ENCODE measurements at regions of chr16 and their contacts with region 1.

Region 1: GRCh38 chr16:62225697-62226280 is 189.6 kb upstream of the CDH8 start:
- DNase-seq: peak; percentile 97
- H3K4me3 ChIP-seq: no peak overlapping the region
- H3K27ac ChIP-seq: no peak overlapping the region
- H3K4me1 ChIP-seq: no peaks in the 10 kb centered on the region
- H3K27me3 ChIP-seq: no peaks in the 10 kb centered on the region
- CTCF ChIP-seq: peak; percentile 88

Region 2: GRCh38 chr16:62256406-62256805 is 30.6 kb after region 1 on chr16:
- CTCF ChIA-PET with region 1: interaction called, 19 read pairs
- POLR2A ChIA-PET with region 1: no interaction called
- intact Hi-C with region 1: loop called (anchors 1 kb)
- DNase-seq: peak; percentile 82
- H3K4me3 ChIP-seq: no peak overlapping the region
- H3K27ac ChIP-seq: no peak overlapping the region
- H3K4me1 ChIP-seq: peaks cover 4% of the 10 kb centered on the region
- H3K27me3 ChIP-seq: no peaks in the 10 kb centered on the region
- CTCF ChIP-seq: peak; percentile 70

Region 3: GRCh38 chr16:62503073-62503472 is 277.3 kb after region 1 on chr16:
- CTCF ChIA-PET with region 1: no interaction called
- POLR2A ChIA-PET with region 1: no interaction called
- intact Hi-C with region 1: no loop called
- DNase-seq: no peak
- H3K4me3 ChIP-seq: no peak overlapping the region
- H3K27ac ChIP-seq: no peak overlapping the region
- H3K4me1 ChIP-seq: no peaks in the 10 kb centered on the region
- H3K27me3 ChIP-seq: no peaks in the 10 kb centered on the region
- CTCF ChIP-seq: no peak

Region 4: GRCh38 chr16:62870554-62870953 is 644.8 kb after region 1 on chr16:
- CTCF ChIA-PET with region 1: interaction called, 3 read pairs
- POLR2A ChIA-PET with region 1: no interaction called
- intact Hi-C with region 1: loop called (anchors 10 kb)
- DNase-seq: no peak
- H3K4me3 ChIP-seq: no peak overlapping the region
- H3K27ac ChIP-seq: no peak overlapping the region
- H3K4me1 ChIP-seq: no peaks in the 10 kb centered on the region
- H3K27me3 ChIP-seq: no peaks in the 10 kb centered on the region
- CTCF ChIP-seq: 0 out of 2 replicates have a peak, but pooled peaks have one; percentile 30

Region 5: DNA sequence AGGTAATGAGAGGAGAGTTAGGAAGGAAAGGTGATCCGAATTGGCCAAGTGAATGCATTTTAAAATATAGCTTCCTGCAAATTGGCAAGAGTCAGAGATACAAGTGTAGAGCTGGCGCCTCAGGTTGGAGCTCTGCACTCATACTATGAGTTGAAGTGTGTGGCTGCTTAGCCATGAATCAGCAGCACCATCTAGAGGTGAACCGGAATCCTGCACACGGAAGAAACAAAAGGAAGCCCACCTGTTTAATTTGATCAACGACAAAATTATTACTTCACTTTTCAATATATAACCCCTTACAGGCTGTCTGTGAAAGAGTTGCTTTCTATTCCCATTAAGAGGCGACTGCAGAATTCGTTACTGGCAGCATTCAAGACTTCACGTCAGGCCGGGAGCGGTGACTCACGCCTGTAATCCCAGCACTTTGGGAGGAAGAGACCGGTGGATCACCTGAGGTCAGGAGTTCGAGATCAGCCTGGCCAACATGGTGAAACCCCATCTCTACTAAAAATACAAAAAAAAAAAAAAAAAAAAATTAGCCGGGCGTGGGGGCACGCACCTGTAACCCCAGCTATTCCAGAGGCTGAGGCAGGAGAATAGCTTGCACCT is 1064.2 kb after region 1 on chr16:
- CTCF ChIA-PET with region 1: interaction called, 12 read pairs
- POLR2A ChIA-PET with region 1: no interaction called
- intact Hi-C with region 1: loop called (anchors 10 kb)
- DNase-seq: peak; percentile 72
- H3K4me3 ChIP-seq: no peak overlapping the region
- H3K27ac ChIP-seq: no peak overlapping the region
- H3K4me1 ChIP-seq: no peaks in the 10 kb centered on the region
- H3K27me3 ChIP-seq: no peaks in the 10 kb centered on the region
- CTCF ChIP-seq: peak; percentile 91